Motor neuron (in vitro differentiated cells): ENCODE measurements at regions of chr12 and their contacts with region 1.

Region 1: DNA sequence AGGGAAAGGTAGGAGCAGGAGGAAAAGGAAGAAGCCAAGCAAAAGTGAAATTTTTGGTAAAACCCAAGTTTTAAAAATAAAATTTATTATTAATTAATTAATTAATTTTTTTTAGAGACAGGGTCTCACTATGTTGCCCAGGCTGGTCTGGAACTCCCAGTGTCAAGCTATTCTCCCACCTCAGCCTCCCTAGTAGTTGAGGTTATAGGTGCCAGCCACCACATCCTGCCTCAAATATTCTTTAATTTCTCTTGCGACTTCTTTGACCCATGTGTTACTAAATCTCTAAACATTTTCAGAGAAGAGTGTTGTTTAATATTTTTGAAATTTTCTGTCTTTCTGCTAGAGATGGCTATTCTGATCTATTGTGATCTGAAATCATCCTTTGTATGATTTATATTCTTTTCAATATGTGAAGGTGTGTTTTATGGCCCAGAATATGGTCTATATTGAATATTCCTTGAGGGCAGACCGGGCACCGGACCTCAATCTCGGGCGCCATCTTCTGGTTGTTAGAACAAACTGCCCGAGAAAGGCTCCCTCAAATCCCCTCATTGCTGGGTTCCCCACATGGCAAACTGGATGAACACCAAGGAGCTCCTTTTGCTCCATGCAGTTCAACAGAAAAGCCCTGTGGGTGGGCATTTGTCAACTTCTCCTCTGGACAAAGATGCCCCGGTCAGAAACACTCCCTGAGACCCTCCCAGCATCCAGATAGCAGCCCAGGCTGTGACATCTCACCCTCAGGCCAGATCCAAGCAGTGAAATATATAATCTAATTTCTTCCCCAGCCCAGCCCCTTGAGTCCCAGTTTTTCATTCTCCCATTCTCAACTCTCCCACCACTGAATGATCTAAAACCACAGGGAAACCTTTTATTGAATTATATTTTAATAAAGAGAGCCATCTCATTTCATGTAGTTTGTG is 110.5 kb downstream of the ASCL4 start:
- ATAC-seq: peak; percentile 67 to 90 (median 78)
- H3K4me3 ChIP-seq: no peak overlapping the region
- H3K27ac ChIP-seq: no peak overlapping the region
- H3K4me1 ChIP-seq: no peaks in the 10 kb centered on the region

Region 2: GRCh38 chr12:107670999-107671643 is 213.9 kb before region 1 on chr12:
- in situ Hi-C with region 1: loop called in 8 of 9 experiments (anchors 10 to 25 kb)
- ATAC-seq: peak in 3 of 8 experiments; percentile 54 to 68 (median 57)
- H3K4me3 ChIP-seq: no peak overlapping the region
- H3K27ac ChIP-seq: no peak overlapping the region
- H3K4me1 ChIP-seq: no peaks in the 10 kb centered on the region

Region 3: DNA sequence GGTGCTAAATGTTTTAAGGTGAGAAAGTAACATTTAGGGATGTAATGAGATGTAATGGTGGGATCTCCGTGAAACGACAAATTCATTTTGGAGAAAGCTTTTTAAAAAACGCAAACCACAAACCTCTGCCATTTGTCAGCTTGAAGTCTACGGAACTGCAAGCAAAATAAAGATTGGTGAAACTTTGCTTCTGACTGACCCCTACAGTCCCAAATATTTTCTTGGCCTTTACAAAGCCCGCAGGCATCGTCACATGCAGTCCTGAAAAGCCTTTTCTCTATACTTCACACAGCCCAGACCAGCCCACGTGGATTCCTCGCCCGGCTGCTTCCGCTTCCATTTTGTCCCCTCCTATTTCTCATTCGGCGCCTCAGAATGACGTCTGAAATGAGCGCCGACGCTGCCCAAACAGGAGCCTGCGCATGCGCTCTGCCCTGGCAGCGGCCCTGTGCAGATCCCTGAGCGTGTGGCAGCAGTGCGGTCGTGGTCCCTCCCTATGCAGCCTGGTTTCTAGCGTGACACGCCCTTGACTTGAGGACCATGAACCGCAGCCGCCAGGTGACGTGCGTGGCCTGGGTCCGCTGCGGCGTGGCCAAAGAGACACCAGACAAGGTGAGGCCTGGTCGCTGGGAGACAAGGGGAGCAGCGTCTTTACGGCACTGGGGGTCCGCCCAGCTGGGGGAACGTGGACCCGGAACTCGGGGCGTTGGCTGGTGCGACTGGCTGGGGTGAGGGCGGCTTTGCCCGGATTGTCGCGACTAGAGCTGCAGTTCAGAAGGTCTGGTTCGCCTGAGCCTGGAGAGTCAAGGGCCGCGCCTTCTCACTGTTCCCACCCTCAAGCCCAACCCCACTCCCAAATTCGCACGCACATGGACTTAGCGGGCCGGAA is 199.4 kb before region 1 on chr12 and contains the start of gene PWP1:
- in situ Hi-C with region 1: loop called in 7 of 9 experiments (anchors 25 kb)
- ATAC-seq: peak; percentile 86 to 97 (median 95)
- H3K4me3 ChIP-seq: peak within 1 kb of the TSS; percentile 57 to 74 (median 62)
- H3K27ac ChIP-seq: peak within 1 kb of the TSS; percentile 80 to 87
- H3K4me1 ChIP-seq: peaks cover 8 to 9% of the 10 kb centered on the region in 2 donors
- total RNA-seq, gene PWP1: 27.5 to 46.4 (median 39.4) TPM

Region 4: GRCh38 chr12:107760809-107761501 is 124.1 kb before region 1 on chr12 and contains the start of gene PRDM4:
- in situ Hi-C with region 1: loop called in 1 of 9 experiments (anchors 25 kb)
- ATAC-seq: peak; percentile 86 to 96 (median 92)
- H3K4me3 ChIP-seq: peak within 1 kb of the TSS; percentile 68 to 81 (median 75)
- H3K27ac ChIP-seq: peak within 1 kb of the TSS; percentile 88 to 89
- H3K4me1 ChIP-seq: peaks cover 2 to 10% of the 10 kb centered on the region in 2 donors
- total RNA-seq, gene PRDM4: 20.3 to 45.4 (median 31.3) TPM